ENCODE measurements at regions of chr2 and their contacts with region 1.

Region 1: GRCh38 chr2:121297217-121297830 is 12.3 kb upstream of the TFCP2L1 start:
- DNase-seq: no peak
- H3K4me3 ChIP-seq: no peak overlapping the region
- H3K27ac ChIP-seq: no peak overlapping the region
- H3K4me1 ChIP-seq: no peaks in the 10 kb centered on the region
- H3K27me3 ChIP-seq: no peaks in the 10 kb centered on the region
- CTCF ChIP-seq: peak; percentile 82 to 88

Region 2: DNA sequence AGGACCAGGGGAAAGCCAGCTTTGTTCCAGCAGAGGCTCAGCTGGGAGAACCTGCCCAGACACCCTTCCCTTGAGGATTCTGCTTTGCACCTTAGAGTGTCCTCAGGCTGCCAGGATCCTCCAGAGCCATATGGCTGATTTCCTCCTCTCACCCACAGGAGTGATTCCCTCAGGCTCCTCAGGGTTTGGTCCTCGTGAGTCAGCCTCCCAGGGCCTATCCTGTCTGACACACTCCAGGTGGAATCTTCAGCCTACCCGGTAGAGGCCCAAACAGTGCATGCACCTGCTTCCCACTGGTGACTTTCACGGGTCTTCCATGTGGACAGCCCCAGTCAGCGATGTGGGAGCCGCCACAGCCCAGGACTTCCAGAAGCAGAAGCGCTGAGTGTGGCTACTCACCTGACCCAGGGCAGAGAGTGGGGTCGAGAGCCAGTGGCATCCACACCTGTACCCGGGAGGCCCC is 85.6 kb before region 1 on chr2:
- CTCF ChIA-PET with region 1: no interaction called
- dilution Hi-C with region 1: no loop called
- in situ Hi-C with region 1: no loop called
- intact Hi-C with region 1: no loop called
- DNase-seq: peak; percentile 74
- H3K4me3 ChIP-seq: no peak overlapping the region
- H3K27ac ChIP-seq: peak overlapping the region; percentile 31
- H3K4me1 ChIP-seq: peaks cover 24% of the 10 kb centered on the region
- H3K27me3 ChIP-seq: no peaks in the 10 kb centered on the region
- CTCF ChIP-seq: no peak

Region 3: DNA sequence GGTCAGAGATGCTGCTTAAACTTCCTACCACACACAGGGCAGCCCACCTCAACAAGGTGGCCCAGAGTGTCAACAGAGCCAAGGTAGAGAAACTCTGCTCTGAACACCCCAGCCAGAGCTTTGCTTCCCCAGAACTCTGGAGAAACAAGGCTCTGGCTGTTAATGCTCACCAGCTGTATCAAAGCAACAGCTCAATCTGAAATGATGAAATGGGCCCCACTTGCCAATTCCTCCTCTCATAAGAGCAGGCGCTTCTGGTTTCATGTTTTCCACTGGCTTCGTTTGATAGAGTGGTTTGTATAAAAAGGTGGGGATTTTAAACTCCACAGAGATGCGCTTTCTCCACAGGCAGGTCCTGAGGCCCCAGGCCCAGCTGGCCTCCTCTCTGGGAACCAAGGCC is 48.6 kb after region 1 on chr2:
- CTCF ChIA-PET with region 1: no interaction called
- dilution Hi-C with region 1: loop called (anchors 5 kb)
- in situ Hi-C with region 1: no loop called
- intact Hi-C with region 1: no loop called
- DNase-seq: no peak
- H3K4me3 ChIP-seq: no peak overlapping the region
- H3K27ac ChIP-seq: no peak overlapping the region
- H3K4me1 ChIP-seq: peaks cover 8% of the 10 kb centered on the region
- H3K27me3 ChIP-seq: no peaks in the 10 kb centered on the region
- CTCF ChIP-seq: no peak

Region 4: DNA sequence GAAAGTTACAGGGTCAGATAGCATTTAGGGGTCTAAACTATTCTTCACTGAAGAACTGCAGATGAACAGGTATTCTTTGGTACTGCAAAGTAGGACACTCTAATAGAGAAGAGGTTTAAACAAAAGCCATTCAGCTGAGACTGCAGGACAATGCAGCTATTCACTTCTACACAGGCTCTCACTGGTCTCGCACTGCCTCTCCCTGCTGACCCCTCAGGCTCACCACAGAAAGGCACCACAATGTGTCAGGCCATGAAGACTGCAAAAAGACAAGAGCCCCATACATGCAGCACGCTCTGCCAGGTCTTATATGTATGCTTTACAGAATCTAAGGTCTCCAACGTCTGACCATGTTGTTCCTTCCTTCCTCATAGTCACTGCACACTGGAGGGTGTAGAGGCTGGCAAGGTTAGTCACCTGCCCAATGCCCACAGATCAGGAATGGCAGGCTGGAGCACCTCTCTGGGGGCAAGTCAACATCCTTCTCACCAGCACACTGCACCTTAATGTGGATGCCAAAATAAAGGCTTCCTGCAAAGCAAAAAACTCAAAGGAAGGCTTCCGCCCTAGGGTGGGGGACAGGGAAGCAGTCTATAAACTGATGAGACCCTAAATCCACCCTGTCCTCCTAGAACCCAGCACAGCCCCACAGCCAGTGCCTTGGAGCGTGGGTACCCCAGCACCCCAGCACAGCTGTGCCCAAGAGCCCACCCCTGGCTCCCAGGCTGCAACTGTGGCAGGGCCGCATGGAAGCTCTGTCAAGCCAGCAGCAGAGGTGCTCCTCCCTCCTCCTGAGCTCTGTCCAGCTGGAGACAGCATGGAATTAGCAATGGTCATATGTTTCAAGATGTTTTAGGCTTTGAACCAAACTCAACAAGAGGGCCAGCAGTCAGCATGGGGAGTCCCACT is 222.7 kb after region 1 on chr2:
- CTCF ChIA-PET with region 1: no interaction called
- dilution Hi-C with region 1: no loop called
- in situ Hi-C with region 1: no loop called
- intact Hi-C with region 1: no loop called
- DNase-seq: peak; percentile 75
- H3K4me3 ChIP-seq: no peak overlapping the region
- H3K27ac ChIP-seq: peak overlapping the region; percentile 61
- H3K4me1 ChIP-seq: peaks cover 41% of the 10 kb centered on the region
- H3K27me3 ChIP-seq: no peaks in the 10 kb centered on the region
- CTCF ChIP-seq: no peak

Region 5: DNA sequence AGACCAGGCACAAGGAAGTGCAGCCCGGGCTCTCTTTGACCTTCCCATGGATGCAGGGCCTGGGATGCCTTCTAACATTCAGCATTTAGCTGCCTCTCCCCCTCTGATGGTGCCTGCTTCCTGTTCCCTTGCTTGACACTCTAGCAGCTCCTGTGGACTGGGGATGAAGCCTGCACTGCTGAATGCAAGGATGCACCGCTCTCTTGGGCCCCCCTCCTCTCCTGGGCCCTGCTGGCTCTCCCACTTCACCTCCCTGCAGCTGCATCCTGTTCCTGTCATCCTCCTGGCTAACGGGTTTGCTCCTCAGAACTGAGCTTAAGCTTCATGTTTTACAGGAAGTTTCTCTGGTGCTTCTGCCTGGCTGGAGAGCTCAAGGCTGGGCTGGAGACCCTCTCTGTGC is 712.2 kb after region 1 on chr2:
- CTCF ChIA-PET with region 1: no interaction called
- dilution Hi-C with region 1: no loop called
- in situ Hi-C with region 1: no loop called
- intact Hi-C with region 1: no loop called
- DNase-seq: no peak
- H3K4me3 ChIP-seq: no peak overlapping the region
- H3K27ac ChIP-seq: no peak overlapping the region
- H3K4me1 ChIP-seq: no peaks in the 10 kb centered on the region
- H3K27me3 ChIP-seq: no peaks in the 10 kb centered on the region
- CTCF ChIP-seq: no peak